WTC11 (cell line): ENCODE measurements at regions of chr1 and their contacts with region 1.

Region 1: DNA sequence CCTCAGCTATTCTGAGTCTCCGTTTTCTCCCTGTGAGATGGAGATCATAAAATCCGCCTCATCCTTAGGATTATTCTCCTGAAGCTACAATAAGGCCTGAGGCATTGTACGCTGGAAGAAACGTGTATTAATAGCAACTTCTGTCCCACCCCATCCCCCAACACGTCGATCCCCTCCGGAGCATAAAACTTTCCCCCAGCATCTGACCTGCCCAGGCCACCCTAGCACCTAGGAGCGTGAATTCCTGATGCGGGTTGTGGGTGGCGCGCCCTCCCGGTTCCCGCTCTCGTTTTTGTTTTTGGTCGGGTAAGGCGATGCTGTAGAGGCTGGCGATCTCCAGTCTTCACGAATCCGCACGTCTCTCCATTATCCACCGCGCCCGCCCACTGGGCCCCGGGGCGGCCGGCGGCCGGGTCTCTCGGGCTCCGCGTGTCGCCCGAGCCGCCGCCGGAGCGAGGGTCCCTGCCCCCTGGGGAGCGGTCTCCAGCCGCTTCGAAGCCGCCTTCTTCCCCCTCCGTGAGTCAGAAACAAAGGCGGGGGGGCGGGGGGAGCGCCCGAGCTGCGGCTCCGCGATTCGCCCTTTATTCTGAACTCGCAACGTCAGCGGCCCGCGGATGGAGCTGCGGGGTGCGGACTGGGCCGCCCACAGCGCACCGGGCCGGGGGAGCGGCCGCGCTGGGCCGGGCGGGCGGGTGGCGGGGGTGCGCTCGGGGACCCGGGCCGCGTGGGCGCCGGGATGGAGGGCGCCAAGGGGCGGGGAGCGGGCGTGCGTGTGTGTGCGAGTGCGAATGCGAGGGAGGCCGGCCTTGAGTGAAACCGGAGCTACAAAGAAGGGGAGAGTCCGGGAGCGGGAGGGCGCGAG is at the start of gene PLEKHO1:
- DNase-seq: peak; percentile 60
- ATAC-seq: peak; percentile 47
- H3K4me3 Mint-ChIP-seq: peak within 1 kb of the TSS; percentile 85
- H3K27ac Mint-ChIP-seq: no peak within 1 kb of the TSS; the same call in 1 of the 2 replicates
- H3K4me1 Mint-ChIP-seq: peaks cover 29% of the 10 kb centered on the region
- H3K27me3 Mint-ChIP-seq: peaks cover 23% of the 10 kb centered on the region
- CTCF ChIP-seq: no peak
- total RNA-seq, gene PLEKHO1: 23.3 to 27.0 TPM (median 25.7 TPM) in 3 replicates

Region 2: GRCh38 chr1:150162862-150163706 is 13.6 kb after region 1 on chr1:
- CTCF ChIA-PET with region 1: interaction called, 11 read pairs
- POLR2A ChIA-PET with region 1: interaction called, 16 read pairs
- DNase-seq: peak; percentile 82
- ATAC-seq: peak; percentile 95
- H3K4me3 Mint-ChIP-seq: peak overlapping the region; percentile 66
- H3K27ac Mint-ChIP-seq: peak overlapping the region; percentile 99
- H3K4me1 Mint-ChIP-seq: peaks cover 42% of the 10 kb centered on the region
- H3K27me3 Mint-ChIP-seq: no peaks in the 10 kb centered on the region
- CTCF ChIP-seq: no peak

Region 3: DNA sequence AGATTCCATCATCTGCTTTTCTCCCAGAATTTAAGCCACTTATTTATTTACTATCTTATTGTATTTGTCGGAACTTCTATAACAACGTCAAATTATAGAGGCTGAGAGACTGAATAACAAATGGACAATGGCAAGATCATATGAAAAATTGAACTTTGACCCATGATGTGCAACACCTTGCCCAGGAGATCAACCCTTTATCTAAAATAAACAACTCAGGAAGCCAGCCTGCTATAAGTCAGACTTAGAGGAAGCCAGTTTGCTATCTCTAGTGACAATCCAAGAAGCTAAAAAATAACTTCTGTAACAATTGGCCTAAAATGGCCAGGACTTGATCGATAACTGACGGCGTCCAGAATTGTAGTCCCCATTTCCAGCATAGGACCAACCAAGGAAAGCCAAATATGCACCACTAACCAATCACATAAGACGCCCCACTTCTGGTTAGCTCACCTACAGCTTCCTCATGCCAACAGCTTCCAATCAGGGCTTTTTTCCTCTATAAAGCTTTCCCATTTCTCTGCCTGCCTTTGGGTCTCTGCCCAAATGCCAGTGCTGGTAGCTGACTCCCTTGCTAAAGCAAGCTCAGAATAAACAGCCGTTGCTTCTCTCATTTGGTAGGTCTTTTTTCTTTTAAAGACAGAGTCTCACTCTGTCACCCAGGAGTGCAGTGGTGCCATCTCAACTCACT is 57.9 kb after region 1 on chr1:
- CTCF ChIA-PET with region 1: no interaction called
- POLR2A ChIA-PET with region 1: no interaction called
- DNase-seq: no peak
- ATAC-seq: no peak
- H3K4me3 Mint-ChIP-seq: no peak overlapping the region
- H3K27ac Mint-ChIP-seq: no peak overlapping the region
- H3K4me1 Mint-ChIP-seq: no peaks in the 10 kb centered on the region
- H3K27me3 Mint-ChIP-seq: no peaks in the 10 kb centered on the region
- CTCF ChIP-seq: no peak